ENCODE measurements at regions of chr13 and their contacts with region 1.

Region 1: DNA sequence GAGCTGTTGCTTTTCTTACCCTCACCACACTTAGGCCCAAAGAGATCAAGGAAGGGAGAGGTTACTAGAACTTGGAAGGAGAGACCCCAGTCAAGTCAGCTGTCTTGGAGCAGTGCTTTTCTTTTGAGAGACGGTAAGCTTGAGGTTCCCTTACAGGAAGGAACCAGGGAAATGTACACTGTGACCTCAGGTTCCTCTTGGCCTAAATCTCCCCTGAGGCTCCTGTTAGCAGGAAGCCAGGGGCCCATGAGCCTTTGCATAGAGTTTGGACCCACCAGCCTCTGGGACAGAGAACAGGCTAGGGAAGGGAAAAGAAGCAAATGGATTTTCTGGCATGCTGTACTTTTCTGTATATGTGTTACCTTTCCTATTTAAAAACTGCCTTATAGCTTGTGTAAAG is 5.9 kb upstream of the GPR18 start:
- DNase-seq: no peak
- H3K4me3 ChIP-seq: no peak overlapping the region
- H3K27ac ChIP-seq: peak overlapping the region in 2 of 5 donors; percentile 1 to 22
- H3K4me1 ChIP-seq: peaks cover 0 to 21% (median 7%) of the 10 kb centered on the region in 4 donors
- H3K27me3 ChIP-seq: no peaks in the 10 kb centered on the region
- CTCF ChIP-seq: no peak
- EP300 ChIP-seq: no peak
- POLR2A ChIP-seq: no peak

Region 2: DNA sequence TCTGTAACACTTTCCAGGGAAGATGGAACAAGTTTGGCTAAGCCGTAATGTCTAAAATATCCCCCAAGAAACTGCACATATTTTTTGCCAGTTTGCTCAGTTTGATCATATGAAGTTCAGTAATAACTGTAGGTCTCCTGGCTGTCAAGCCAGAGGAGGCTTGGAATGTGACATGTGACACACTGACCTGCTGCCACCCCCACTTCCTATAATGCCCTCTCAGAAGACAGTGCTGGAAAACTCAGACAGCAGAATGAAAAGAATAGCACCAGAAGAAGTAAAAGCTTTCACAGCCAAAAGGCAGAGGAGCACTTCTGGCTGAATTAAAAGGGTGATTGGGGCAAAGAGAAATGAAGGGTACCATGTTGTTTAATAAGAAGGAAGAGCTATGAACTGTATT is 130.8 kb before region 1 on chr13:
- intact Hi-C with region 1: no loop called
- DNase-seq: no peak
- H3K4me3 ChIP-seq: no peak overlapping the region
- H3K27ac ChIP-seq: no peak overlapping the region
- H3K4me1 ChIP-seq: no peaks in the 10 kb centered on the region
- H3K27me3 ChIP-seq: peaks cover 0 to 38% (median 0%) of the 10 kb centered on the region in 3 donors
- CTCF ChIP-seq: no peak
- EP300 ChIP-seq: no peak
- POLR2A ChIP-seq: no peak

Region 3: DNA sequence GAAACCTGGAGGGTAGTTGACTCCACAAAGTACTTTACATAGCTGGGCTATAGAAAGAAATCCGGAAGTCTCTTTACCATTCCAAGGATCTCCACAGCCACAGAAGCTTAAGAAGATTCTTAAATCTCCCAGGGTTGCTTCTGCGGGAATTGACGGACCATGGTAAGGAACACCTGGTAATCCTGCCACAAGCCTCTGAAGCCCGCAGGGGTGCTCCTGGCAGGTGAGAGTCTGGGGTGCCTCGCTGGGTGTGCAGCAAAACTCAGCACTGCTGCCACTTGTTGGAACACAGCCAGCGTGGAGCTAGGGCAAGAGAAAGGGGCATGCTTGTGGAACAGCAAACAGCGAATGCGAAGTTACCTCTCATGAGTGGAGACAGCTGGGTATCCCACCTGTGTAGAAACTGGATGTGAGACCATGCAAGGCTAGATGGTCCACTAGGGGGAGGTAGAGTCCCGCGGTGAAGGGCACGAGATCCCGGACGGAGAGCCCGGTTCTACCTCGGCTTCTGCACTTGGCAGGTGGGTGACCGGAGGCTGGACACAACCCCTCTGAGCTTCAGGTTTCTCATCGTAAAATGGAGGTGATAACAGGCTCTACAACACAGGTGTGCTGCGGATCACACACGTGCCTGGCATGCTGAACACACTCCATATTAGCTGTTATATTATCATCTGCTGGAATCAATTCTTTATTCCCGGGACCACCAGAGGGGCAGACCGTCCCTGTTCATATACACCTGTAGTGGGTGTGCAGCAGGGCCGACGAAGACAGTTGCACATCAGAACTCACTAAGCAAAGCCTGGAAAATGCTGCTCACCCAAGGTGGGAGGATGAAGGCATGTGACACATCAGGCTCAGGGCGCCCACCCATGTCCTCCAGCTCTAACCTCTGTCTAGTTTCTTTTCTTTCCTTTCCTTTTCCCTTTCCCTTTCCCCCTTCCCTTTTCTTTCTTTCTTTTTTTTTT is 87.5 kb before region 1 on chr13:
- intact Hi-C with region 1: loop called (anchors 5 kb)
- DNase-seq: peak; percentile 81 to 90
- H3K4me3 ChIP-seq: no peak overlapping the region
- H3K27ac ChIP-seq: no peak overlapping the region
- H3K4me1 ChIP-seq: peaks cover 0 to 7% (median 7%) of the 10 kb centered on the region in 4 donors
- H3K27me3 ChIP-seq: peaks cover 0 to 44% (median 4%) of the 10 kb centered on the region in 3 donors
- CTCF ChIP-seq: peak in 5 of 7 experiments; percentile 83 to 93 (median 90)
- EP300 ChIP-seq: no peak
- POLR2A ChIP-seq: no peak